CD4-positive, alpha-beta T cell (primary cell): ENCODE measurements at regions of chr14 and their contacts with region 1.

Region 1: GRCh38 chr14:22002860-22003309 is 329.3 kb upstream of the OR4E1 start:
- DNase-seq: peak; percentile 45 to 86 (median 64)
- ATAC-seq: peak; percentile 77
- H3K4me3 ChIP-seq: peak overlapping the region; percentile 44
- H3K4me3 Mint-ChIP-seq: peak overlapping the region; percentile 88
- H3K27ac ChIP-seq: peak overlapping the region; percentile 44 to 56
- H3K27ac Mint-ChIP-seq: peak overlapping the region; percentile 93
- H3K4me1 ChIP-seq: peaks cover 7% of the 10 kb centered on the region
- H3K4me1 Mint-ChIP-seq: peaks cover 29% of the 10 kb centered on the region
- H3K27me3 ChIP-seq: no peaks in the 10 kb centered on the region
- H3K27me3 Mint-ChIP-seq: no peaks in the 10 kb centered on the region
- CTCF ChIP-seq: peak; percentile 60

Region 2: GRCh38 chr14:21768116-21768874 is 234.6 kb before region 1 on chr14:
- CTCF ChIA-PET with region 1: no interaction called
- POLR2A ChIA-PET with region 1: no interaction called
- intact Hi-C with region 1: no loop called
- DNase-seq: peak in 4 of 14 experiments; percentile 9 to 72 (median 63)
- ATAC-seq: peak; percentile 91
- H3K4me3 ChIP-seq: peak overlapping the region; percentile 26
- H3K4me3 Mint-ChIP-seq: peak overlapping the region; percentile 69
- H3K27ac ChIP-seq: no peak overlapping the region
- H3K27ac Mint-ChIP-seq: peak overlapping the region; percentile 77
- H3K4me1 ChIP-seq: no peaks in the 10 kb centered on the region
- H3K4me1 Mint-ChIP-seq: peaks cover 6% of the 10 kb centered on the region
- H3K27me3 ChIP-seq: no peaks in the 10 kb centered on the region
- H3K27me3 Mint-ChIP-seq: peaks cover 12% of the 10 kb centered on the region
- CTCF ChIP-seq: peak; percentile 74

Region 3: GRCh38 chr14:21987937-21988336 is 14.9 kb before region 1 on chr14:
- CTCF ChIA-PET with region 1: interaction called, 18 read pairs
- POLR2A ChIA-PET with region 1: interaction called, 10 read pairs
- intact Hi-C with region 1: no loop called
- DNase-seq: peak in 3 of 14 experiments; percentile 49 to 62 (median 54)
- ATAC-seq: no peak
- H3K4me3 ChIP-seq: no peak overlapping the region
- H3K4me3 Mint-ChIP-seq: peak overlapping the region; percentile 3
- H3K27ac ChIP-seq: no peak overlapping the region
- H3K27ac Mint-ChIP-seq: peak overlapping the region; percentile 75
- H3K4me1 ChIP-seq: peaks cover 6% of the 10 kb centered on the region
- H3K4me1 Mint-ChIP-seq: peaks cover 12% of the 10 kb centered on the region
- H3K27me3 ChIP-seq: no peaks in the 10 kb centered on the region
- H3K27me3 Mint-ChIP-seq: no peaks in the 10 kb centered on the region
- CTCF ChIP-seq: peak; percentile 50

Region 4: GRCh38 chr14:22039938-22040775 is 37.3 kb after region 1 on chr14:
- CTCF ChIA-PET with region 1: interaction called, 7 read pairs
- POLR2A ChIA-PET with region 1: interaction called, 6 read pairs
- intact Hi-C with region 1: loop called in 1 of 2 experiments (anchors 5 kb)
- DNase-seq: peak in 13 of 14 experiments; percentile 2 to 71 (median 38)
- ATAC-seq: peak; percentile 95
- H3K4me3 ChIP-seq: peak overlapping the region; percentile 38
- H3K4me3 Mint-ChIP-seq: peak overlapping the region; percentile 86
- H3K27ac ChIP-seq: peak overlapping the region in 1 of 2 donors; percentile 35
- H3K27ac Mint-ChIP-seq: peak overlapping the region; percentile 93
- H3K4me1 ChIP-seq: no peaks in the 10 kb centered on the region
- H3K4me1 Mint-ChIP-seq: peaks cover 22% of the 10 kb centered on the region
- H3K27me3 ChIP-seq: no peaks in the 10 kb centered on the region
- H3K27me3 Mint-ChIP-seq: no peaks in the 10 kb centered on the region
- CTCF ChIP-seq: peak; percentile 59

Region 5: GRCh38 chr14:22221508-22221907 is 218.6 kb after region 1 on chr14:
- CTCF ChIA-PET with region 1: no interaction called
- POLR2A ChIA-PET with region 1: no interaction called
- intact Hi-C with region 1: no loop called
- DNase-seq: peak in 3 of 14 experiments; percentile 39 to 51 (median 39)
- ATAC-seq: peak; percentile 41
- H3K4me3 ChIP-seq: no peak overlapping the region
- H3K4me3 Mint-ChIP-seq: peak overlapping the region; percentile 73
- H3K27ac ChIP-seq: no peak overlapping the region
- H3K27ac Mint-ChIP-seq: peak overlapping the region; percentile 67
- H3K4me1 ChIP-seq: no peaks in the 10 kb centered on the region
- H3K4me1 Mint-ChIP-seq: peaks cover 17% of the 10 kb centered on the region
- H3K27me3 ChIP-seq: no peaks in the 10 kb centered on the region
- H3K27me3 Mint-ChIP-seq: no peaks in the 10 kb centered on the region
- CTCF ChIP-seq: peak; percentile 12